Psoas muscle (tissue), 8 donors: ENCODE measurements at regions of chr2 and their contacts with region 1.

Region 1: GRCh38 chr2:33086400-33087015 is 139.8 kb downstream of the LTBP1 start:
- DNase-seq: no peak
- ATAC-seq: peak; percentile 60 to 83 (median 70)
- H3K4me3 ChIP-seq: peak overlapping the region; percentile 15
- H3K27ac ChIP-seq: no peak overlapping the region
- H3K4me1 ChIP-seq: peaks cover 10% of the 10 kb centered on the region
- H3K27me3 ChIP-seq: no peaks in the 10 kb centered on the region
- CTCF ChIP-seq: peak; percentile 38

Region 2: GRCh38 chr2:32772638-32773447 is 313.7 kb before region 1 on chr2:
- intact Hi-C with region 1: loop called in 1 of 2 experiments (anchors 5 kb)
- DNase-seq: no peak
- ATAC-seq: peak; percentile 61 to 80 (median 62)
- H3K4me3 ChIP-seq: no peak overlapping the region
- H3K27ac ChIP-seq: no peak overlapping the region
- H3K4me1 ChIP-seq: no peaks in the 10 kb centered on the region
- H3K27me3 ChIP-seq: no peaks in the 10 kb centered on the region
- CTCF ChIP-seq: peak; percentile 77

Region 3: DNA sequence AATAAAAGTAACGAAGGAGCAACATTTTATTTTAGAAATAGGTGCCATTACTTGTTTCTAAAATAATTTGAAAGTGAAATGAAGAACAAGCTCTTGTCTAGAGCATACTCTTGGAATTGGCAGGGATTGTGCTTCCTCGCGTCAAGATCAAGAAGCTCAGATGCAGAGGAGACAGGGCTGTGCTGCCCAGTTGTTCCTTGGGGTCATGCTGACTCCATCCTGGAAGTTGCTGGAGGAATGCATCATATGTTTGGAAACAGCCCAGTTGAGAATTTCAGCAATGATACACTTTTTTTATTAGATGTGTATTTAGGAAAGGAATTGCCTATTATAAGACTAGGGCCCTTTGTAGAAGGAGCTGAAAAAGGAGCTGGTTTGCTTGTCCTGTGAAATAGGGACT is 122.6 kb before region 1 on chr2:
- intact Hi-C with region 1: no loop called
- DNase-seq: no peak
- ATAC-seq: no peak
- H3K4me3 ChIP-seq: no peak overlapping the region
- H3K27ac ChIP-seq: no peak overlapping the region
- H3K4me1 ChIP-seq: no peaks in the 10 kb centered on the region
- H3K27me3 ChIP-seq: no peaks in the 10 kb centered on the region
- CTCF ChIP-seq: no peak

Region 4: GRCh38 chr2:33051586-33052360 is 34.7 kb before region 1 on chr2:
- intact Hi-C with region 1: no loop called
- DNase-seq: peak; percentile 31 to 61
- ATAC-seq: peak in 3 of 4 donors; percentile 62 to 80 (median 76)
- H3K4me3 ChIP-seq: no peak overlapping the region
- H3K27ac ChIP-seq: no peak overlapping the region
- H3K4me1 ChIP-seq: peaks cover 6% of the 10 kb centered on the region
- H3K27me3 ChIP-seq: no peaks in the 10 kb centered on the region
- CTCF ChIP-seq: no peak

Region 5: GRCh38 chr2:33116799-33117198 is 30.3 kb after region 1 on chr2:
- intact Hi-C with region 1: loop called in 1 of 2 experiments (anchors 5 kb)
- DNase-seq: no peak
- ATAC-seq: peak in 3 of 4 donors; percentile 42 to 53 (median 50)
- H3K4me3 ChIP-seq: no peak overlapping the region
- H3K27ac ChIP-seq: no peak overlapping the region
- H3K4me1 ChIP-seq: no peaks in the 10 kb centered on the region
- H3K27me3 ChIP-seq: no peaks in the 10 kb centered on the region
- CTCF ChIP-seq: no peak